Activated CD4-positive, alpha-beta T cell treated with anti-CD3 and anti-CD28 coated beads, Interleukin-2, amount 10 ng/mL, durations not matched to agents 24 days and 14 days (primary cell): ENCODE measurements at regions of chr19 and their contacts with region 1.

Region 1: DNA sequence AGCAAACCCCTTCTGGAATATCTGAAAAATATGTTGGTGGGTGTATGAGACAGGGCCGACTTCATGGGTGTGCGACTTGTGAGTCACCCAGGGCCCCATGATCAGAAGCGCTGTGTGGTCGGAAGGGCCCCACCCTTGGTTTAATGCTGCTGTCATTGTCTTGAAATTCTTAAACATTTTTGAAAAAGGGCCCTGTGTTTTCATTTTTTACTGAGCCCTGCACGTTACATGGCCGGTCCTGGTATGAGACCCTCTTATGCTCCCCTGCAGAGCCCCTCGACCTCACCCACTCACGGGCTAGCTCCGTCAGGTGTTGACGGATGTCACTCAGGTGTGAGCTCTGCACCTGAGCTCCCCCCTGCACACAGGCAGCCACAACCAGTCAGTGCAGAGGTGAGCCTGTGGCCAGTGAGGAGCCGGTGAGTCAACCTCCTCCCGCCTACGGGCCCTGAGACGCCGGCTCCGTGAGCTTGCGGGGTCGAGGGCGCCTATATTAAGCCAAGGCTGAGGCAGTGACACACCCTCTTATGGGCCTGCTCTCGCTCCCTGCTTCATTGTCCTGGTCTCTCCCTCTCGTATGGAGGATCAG is 27.7 kb downstream of the GADD45B start:
- DNase-seq: peak; percentile 83
- H3K4me3 Mint-ChIP-seq: peak overlapping the region; percentile 68
- H3K27ac Mint-ChIP-seq: peak overlapping the region; percentile 80
- H3K4me1 Mint-ChIP-seq: peaks cover 26% of the 10 kb centered on the region
- H3K27me3 Mint-ChIP-seq: peaks cover 11% of the 10 kb centered on the region

Region 2: DNA sequence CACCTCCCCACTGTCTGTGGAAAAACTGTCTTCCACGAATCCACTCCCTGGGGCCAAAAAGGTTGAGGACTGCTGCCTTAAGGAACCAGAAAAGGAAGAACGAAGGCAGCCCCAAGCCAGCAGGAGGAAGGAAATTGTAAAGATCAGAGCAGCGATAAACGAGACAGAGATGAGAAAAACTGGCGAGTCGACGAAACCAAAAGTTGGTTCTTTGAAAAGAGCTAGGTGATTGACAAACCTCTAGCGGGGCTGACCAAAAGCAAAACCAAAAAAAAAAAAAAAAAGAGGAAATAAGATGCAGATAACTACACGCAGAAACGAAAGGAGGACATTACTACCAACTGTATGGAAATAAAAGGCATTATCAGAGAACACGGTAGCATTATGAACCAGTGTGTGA is 49.2 kb after region 1 on chr19:
- intact Hi-C with region 1: loop called (anchors 5 kb)
- DNase-seq: peak; percentile 92
- H3K4me3 Mint-ChIP-seq: peak overlapping the region; percentile 72
- H3K27ac Mint-ChIP-seq: peak overlapping the region; percentile 78
- H3K4me1 Mint-ChIP-seq: peaks cover 31% of the 10 kb centered on the region
- H3K27me3 Mint-ChIP-seq: peaks cover 4% of the 10 kb centered on the region